Activated CD8-positive, alpha-beta T cell treated with anti-CD3 and anti-CD28 coated beads, Interleukin-2, amount 10 ng/mL, durations not matched to agents 7 days and 5 days (primary cell): ENCODE measurements at regions of chr11 and their contacts with region 1.

Region 1: GRCh38 chr11:103108933-103109817 is at the start of gene DYNC2H1:
- DNase-seq: peak; percentile 90
- ATAC-seq: peak; percentile 93
- H3K4me3 Mint-ChIP-seq: peak within 1 kb of the TSS; percentile 87
- H3K27ac Mint-ChIP-seq: peak within 1 kb of the TSS; percentile 83
- H3K4me1 Mint-ChIP-seq: peaks cover 19% of the 10 kb centered on the region
- H3K27me3 Mint-ChIP-seq: peaks cover 16% of the 10 kb centered on the region
- total RNA-seq, gene DYNC2H1: 1.6 to 1.7 TPM

Region 2: DNA sequence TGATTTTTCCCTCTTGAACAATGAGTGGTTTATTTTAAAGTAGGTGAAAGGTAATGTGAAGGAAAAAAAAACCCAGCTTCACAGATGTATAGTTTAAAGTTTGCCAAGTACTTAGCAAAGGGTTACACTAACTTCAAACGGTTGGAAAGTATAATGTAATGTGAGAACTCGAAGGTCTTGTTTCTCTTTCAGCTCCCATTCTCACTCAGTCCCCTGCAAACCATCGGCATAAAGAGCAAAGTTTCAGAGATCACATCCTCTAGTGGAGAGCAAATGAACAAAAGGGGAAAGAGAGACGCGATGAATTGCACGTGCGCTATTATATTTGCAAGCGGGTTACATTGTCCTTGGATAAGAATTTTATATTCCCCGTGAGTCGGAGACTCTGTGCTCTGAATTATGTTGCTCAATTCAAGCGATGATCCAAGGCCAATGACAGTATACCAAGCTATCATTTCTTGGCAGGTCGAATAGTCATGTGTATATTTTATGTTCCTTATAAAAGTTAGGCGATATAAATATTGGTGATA is 829.5 kb before region 1 on chr11:
- CTCF ChIA-PET with region 1: no interaction called
- POLR2A ChIA-PET with region 1: no interaction called
- DNase-seq: no peak
- ATAC-seq: no peak
- H3K4me3 Mint-ChIP-seq: no peak overlapping the region
- H3K27ac Mint-ChIP-seq: no peak overlapping the region
- H3K4me1 Mint-ChIP-seq: peaks cover 10% of the 10 kb centered on the region
- H3K27me3 Mint-ChIP-seq: peaks cover 10% of the 10 kb centered on the region

Region 3: GRCh38 chr11:102831489-102832440 is 277.4 kb before region 1 on chr11:
- CTCF ChIA-PET with region 1: no interaction called
- POLR2A ChIA-PET with region 1: no interaction called
- DNase-seq: peak; percentile 23
- ATAC-seq: no peak
- H3K4me3 Mint-ChIP-seq: no peak overlapping the region
- H3K27ac Mint-ChIP-seq: no peak overlapping the region
- H3K4me1 Mint-ChIP-seq: no peaks in the 10 kb centered on the region
- H3K27me3 Mint-ChIP-seq: peaks cover 24% of the 10 kb centered on the region

Region 4: DNA sequence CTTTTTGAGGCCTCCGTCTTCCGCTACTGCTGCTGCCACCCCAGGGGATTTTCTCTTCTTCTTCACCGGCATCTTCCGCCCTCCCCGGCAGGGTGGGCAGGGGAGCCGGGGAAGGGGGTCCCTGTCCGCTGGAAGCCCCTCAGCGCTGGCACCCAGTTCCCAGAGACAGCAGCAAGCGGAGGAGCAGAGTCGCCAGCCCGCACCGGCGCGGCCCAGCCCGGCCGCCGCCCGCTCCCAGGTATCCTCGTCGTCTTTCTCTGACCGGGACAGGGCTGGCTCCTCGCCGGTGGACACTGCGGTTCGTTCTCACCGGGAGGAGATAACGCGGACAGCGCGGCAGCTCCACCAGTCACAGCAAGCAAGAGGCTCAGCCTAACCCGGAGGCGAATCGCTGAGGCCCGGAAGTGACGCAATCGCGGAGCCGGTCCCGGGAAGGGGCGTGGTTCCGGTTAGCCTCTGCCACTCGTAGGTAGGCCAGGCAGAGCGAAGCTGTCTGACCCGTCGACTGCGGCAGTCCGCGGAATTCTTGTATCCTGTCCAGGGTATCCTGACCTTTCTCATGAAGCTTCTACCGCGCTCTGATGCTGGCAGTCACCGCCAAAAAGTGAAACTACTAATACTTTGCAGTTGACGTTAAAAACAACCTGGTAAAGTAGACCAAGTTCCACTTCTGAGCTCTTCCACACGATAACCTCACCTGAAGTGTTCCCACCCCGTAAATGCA is 17.2 kb before region 1 on chr11 and contains the start of gene DCUN1D5:
- CTCF ChIA-PET with region 1: interaction called, 42 read pairs
- POLR2A ChIA-PET with region 1: interaction called, 26 read pairs
- DNase-seq: peak; percentile 97
- ATAC-seq: peak; percentile 94
- H3K4me3 Mint-ChIP-seq: peak within 1 kb of the TSS; percentile 91
- H3K27ac Mint-ChIP-seq: peak within 1 kb of the TSS; percentile 95
- H3K4me1 Mint-ChIP-seq: peaks cover 27% of the 10 kb centered on the region
- H3K27me3 Mint-ChIP-seq: peaks cover 24% of the 10 kb centered on the region
- total RNA-seq, gene DCUN1D5: 31.3 to 34.0 TPM